ENCODE measurements at regions of chr3 and their contacts with region 1.

Region 1: DNA sequence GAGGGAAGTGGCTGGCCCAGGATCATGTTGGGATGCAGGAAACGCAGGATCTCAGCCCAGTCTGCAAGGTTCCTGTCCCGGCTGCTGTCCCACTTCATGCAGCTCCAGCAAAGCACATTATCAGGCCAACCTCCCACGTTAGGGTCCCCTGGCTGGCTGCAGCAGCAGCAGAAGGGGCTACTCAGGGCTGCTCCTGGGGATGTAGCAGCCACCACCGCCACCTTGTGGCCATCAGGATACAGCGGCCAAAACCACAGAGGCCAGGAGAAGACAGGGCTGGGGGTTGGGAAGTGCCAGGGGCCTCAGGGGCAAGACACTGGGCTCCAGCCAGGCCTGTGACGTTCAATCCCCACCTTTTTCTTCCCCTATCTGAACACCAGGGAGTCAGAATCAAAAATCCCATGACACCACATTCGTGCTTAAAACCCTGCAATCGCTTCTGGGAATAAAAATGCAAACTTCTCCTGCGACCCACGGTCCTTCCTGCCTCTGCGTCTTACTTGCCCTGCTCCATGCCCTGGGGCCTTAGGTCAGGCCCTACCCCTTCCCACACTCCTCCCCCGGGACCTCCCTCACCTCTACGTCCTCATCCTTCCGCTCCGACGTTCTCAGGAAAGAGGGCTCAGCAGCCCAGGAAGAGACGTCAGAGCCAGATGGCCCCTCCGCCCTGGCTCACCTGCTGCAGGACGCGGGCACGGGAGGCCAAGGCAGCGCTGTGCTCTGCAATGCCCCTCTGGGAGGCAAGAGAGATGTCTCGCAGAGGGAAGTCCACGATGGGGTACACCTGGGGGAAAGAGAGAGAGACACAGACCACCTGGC is 21.5 kb downstream of the SSUH2 start:
- DNase-seq: peak; percentile 29
- ATAC-seq: peak; percentile 65
- H3K4me3 Mint-ChIP-seq: no peak overlapping the region
- H3K27ac Mint-ChIP-seq: no peak overlapping the region
- H3K4me1 Mint-ChIP-seq: peaks cover 6% of the 10 kb centered on the region
- H3K27me3 Mint-ChIP-seq: peaks cover 3% of the 10 kb centered on the region
- CTCF ChIP-seq: no peak

Region 2: DNA sequence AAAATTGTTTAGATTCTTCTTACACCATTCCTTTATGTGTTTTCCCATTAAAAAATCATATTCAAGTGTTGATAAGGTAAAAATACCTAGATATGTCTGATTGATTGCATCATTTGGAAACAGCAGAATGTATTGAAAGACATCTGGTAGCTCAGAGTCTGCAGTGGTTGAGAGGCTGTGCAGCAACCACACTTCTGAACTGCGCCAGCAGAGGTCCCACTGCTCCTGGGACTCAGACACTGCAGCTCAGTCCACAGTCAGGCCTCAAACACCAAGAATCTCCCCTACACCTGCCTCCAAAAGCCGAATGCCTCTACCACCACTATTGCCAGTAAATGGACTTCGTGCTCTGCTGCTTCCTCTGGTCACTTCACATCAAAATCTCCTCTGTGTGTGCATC is 298.3 kb before region 1 on chr3:
- CTCF ChIA-PET with region 1: no interaction called
- POLR2A ChIA-PET with region 1: no interaction called
- intact Hi-C with region 1: loop called (anchors 10 kb)
- DNase-seq: no peak
- ATAC-seq: no peak
- H3K4me3 Mint-ChIP-seq: no peak overlapping the region
- H3K27ac Mint-ChIP-seq: no peak overlapping the region
- H3K4me1 Mint-ChIP-seq: peaks cover 11% of the 10 kb centered on the region
- H3K27me3 Mint-ChIP-seq: no peaks in the 10 kb centered on the region
- CTCF ChIP-seq: no peak

Region 3: DNA sequence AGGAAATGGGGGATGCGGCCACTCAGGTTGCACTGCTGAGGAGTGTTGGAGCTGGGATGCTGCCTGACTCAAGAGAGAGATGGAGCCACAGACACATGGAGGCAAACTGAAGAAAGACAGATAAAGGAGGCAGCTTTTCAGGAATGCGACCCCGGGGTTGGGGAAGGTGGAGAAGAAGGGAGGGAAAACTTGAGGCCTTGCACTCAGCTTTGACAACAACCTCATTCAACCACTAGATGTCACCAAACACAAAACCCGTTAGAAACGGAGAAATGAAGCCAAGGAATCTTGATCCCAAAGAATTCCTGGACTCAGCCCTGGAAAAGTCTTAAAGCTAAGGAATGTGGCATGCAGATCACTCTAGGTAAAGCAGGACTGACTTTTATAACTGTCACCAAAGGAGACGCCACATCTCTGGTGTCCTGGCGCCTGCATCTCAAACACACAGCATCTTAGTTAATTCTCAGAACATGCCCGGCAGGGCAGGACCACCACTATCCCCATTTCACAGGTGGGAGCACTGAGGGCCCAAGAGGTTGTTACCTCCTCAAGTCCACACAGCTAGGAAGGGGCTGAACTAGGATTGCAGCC is 181.0 kb before region 1 on chr3:
- CTCF ChIA-PET with region 1: interaction called, 9 read pairs
- POLR2A ChIA-PET with region 1: no interaction called
- intact Hi-C with region 1: loop called (anchors 1 kb)
- DNase-seq: no peak
- ATAC-seq: no peak
- H3K4me3 Mint-ChIP-seq: no peak overlapping the region
- H3K27ac Mint-ChIP-seq: no peak overlapping the region
- H3K4me1 Mint-ChIP-seq: no peaks in the 10 kb centered on the region
- H3K27me3 Mint-ChIP-seq: peaks cover 1% of the 10 kb centered on the region
- CTCF ChIP-seq: no peak

Region 4: DNA sequence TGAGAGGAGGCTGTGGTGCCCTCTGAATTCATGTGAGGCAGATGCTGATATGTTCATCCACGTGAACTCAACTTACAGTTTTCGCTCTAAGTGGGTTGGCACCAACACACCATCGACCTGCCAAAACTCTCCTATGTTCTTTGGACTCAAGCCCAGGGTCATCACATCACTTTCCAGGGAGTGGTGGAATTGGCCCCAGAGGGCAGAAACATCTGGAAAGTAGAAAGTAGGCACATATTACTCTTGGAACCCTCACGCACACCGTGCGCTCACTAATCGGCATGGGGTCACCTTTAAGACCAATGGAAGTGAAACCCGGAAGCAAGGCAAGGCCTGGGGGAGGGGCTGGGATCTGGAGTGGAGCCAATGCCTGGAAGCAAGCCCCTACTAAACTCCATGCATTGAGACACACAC is 19.9 kb before region 1 on chr3:
- CTCF ChIA-PET with region 1: no interaction called
- POLR2A ChIA-PET with region 1: no interaction called
- intact Hi-C with region 1: no loop called
- DNase-seq: no peak
- ATAC-seq: no peak
- H3K4me3 Mint-ChIP-seq: no peak overlapping the region
- H3K27ac Mint-ChIP-seq: no peak overlapping the region
- H3K4me1 Mint-ChIP-seq: no peaks in the 10 kb centered on the region
- H3K27me3 Mint-ChIP-seq: peaks cover 3% of the 10 kb centered on the region
- CTCF ChIP-seq: no peak

Measured in activated B cell treated with CpG ODN at 0.5 μM for 24 hours (primary cell).